GM12878 (cell line): ENCODE measurements at regions of chr17 and their contacts with region 1.

Region 1: GRCh38 chr17:2282297-2282873 is 21.2 kb downstream of the SMG6 start:
- DNase-seq: no peak
- ATAC-seq: peak; percentile 50; the same call in 2 of the 3 replicates
- H3K4me3 ChIP-seq: no peak overlapping the region
- H3K27ac ChIP-seq: peak overlapping the region; percentile 37
- H3K4me1 ChIP-seq: 0 out of 2 replicates have a peak, but pooled peaks cover 3% of the 10 kb centered on the region
- H3K27me3 ChIP-seq: no peaks in the 10 kb centered on the region
- CTCF ChIP-seq: peak; percentile 37 to 64 (median 59); a peak in 4 of 6 replicates
- EP300 ChIP-seq: no peak
- POLR2A ChIP-seq: no peak
- RAD21 ChIP-seq: peak; percentile 73

Region 2: DNA sequence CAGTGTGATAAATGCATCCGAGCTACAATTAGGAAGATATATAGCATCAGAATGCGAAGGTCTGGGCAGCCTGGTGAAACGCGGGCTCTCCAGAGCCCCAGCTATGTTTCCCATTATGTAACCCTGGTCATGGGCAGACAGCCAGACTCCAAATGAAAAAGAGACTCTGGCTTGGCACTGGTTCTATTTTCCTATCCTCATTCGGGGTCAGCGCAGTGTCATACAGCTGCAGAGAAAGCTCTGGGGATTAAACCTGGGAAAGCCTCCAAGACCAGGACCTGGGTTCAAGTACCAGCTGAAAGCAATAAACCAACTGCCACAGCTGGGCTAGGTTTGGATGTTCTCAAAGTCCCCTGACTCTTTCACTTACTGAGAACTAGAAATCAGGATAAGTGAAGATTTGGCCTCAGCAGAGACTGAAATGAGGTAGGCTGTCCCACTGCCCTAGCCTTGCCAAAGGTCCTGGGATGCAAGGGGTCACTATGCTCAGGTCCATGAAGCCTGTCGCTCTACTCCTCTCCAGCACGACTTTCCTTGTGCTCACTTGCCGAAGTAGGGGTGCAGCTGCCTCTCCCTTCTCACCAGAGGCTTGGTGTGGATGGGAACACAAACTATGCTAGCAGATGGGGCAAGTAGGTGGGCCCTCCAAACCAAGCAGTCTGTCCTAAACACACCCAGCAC is 102.6 kb before region 1 on chr17:
- CTCF ChIA-PET with region 1: interaction called, 11 read pairs
- POLR2A ChIA-PET with region 1: no interaction called
- RAD21 ChIA-PET with region 1: no interaction called
- SMC1A ChIA-PET with region 1: interaction called, 3 read pairs
- in situ Hi-C with region 1: no loop called
- intact Hi-C with region 1: no loop called
- DNase-seq: no peak
- ATAC-seq: no peak
- H3K4me3 ChIP-seq: no peak overlapping the region
- H3K27ac ChIP-seq: no peak overlapping the region
- H3K4me1 ChIP-seq: no peaks in the 10 kb centered on the region
- H3K27me3 ChIP-seq: no peaks in the 10 kb centered on the region
- CTCF ChIP-seq: no peak
- EP300 ChIP-seq: no peak
- POLR2A ChIP-seq: no peak
- RAD21 ChIP-seq: no peak

Region 3: DNA sequence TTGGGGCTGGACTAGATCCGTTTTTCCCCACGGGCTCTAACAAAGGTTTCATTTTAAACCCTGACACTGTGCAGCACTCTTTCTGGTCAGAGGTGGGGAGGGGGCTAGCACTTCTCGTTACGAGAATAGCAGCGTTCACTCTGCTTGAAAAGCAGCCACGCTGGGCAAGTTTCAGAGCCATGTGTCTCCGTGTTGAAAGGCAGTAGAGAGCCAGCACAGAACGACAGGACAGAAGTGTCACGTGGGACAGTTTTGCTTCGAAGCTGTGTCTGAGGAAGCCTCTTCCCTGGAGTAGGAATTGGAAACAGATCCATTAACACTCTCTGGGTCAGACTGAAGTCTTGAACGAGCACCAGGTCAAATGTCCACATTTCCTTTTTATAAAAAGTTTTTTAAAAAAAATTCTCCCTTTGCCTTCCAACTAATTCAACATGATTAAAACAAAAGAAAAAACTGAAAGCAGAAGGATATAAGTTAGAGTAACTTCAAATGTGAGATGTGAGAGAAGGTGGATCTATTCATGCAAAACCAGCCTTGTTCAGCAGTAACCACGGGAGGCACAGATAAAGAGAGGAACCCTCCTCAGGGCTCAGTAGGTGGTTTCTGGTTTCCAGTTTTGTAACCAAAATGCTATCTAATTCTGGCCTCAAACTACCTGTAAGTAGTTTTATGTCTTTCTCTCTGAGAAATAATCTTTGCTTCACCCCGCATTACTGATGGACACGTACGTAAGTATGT is 43.8 kb before region 1 on chr17:
- CTCF ChIA-PET with region 1: interaction called, 109 read pairs
- POLR2A ChIA-PET with region 1: no interaction called
- RAD21 ChIA-PET with region 1: interaction called, 63 read pairs
- SMC1A ChIA-PET with region 1: interaction called, 74 read pairs
- in situ Hi-C with region 1: no loop called
- intact Hi-C with region 1: no loop called
- DNase-seq: peak; percentile 86
- ATAC-seq: peak; percentile 88
- H3K4me3 ChIP-seq: peak overlapping the region; percentile 45; the same call in 1 of the 2 replicates
- H3K27ac ChIP-seq: peak overlapping the region; percentile 99
- H3K4me1 ChIP-seq: peaks cover 50% of the 10 kb centered on the region
- H3K27me3 ChIP-seq: no peaks in the 10 kb centered on the region
- CTCF ChIP-seq: no peak
- EP300 ChIP-seq: 0 out of 4 replicates have a peak, but pooled peaks of 1 of the 2 experiments have one; percentile 34
- POLR2A ChIP-seq: peak; percentile 62
- RAD21 ChIP-seq: no peak

Region 4: DNA sequence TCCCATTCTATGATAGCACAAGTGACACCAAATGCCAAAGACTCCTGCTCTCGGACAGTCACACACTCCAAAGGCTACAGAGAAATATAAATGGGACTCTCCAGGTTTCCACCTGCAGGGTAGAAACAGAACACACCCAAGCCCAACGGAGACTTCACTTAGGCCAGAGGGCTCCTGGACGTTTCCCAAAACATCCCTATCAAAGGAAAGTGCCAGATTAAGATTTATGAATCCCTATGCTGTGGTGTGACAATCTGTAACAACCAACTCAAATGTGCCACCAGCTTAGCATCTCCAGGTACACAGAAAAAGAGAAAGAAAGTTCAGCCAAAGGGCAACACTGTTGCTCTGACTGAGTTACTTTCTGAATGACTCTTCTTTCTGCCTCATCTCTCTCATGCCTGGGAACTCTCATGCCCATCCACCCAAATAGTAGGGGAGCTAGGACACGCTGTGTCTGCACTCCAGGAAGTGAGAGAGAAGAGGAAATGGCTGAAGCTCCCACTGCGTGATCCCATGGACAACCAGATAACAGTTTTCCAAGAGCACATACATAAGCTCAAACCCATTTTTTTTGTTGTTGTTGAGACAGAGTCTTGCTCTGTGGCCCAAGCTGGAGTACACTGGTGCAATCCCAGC is 28.5 kb before region 1 on chr17:
- CTCF ChIA-PET with region 1: interaction called, 22 read pairs
- POLR2A ChIA-PET with region 1: interaction called, 4 read pairs
- RAD21 ChIA-PET with region 1: interaction called, 15 read pairs
- SMC1A ChIA-PET with region 1: interaction called, 30 read pairs
- in situ Hi-C with region 1: no loop called
- intact Hi-C with region 1: no loop called
- DNase-seq: peak; percentile 90
- ATAC-seq: peak; percentile 97
- H3K4me3 ChIP-seq: peak overlapping the region; percentile 36; the same call in 1 of the 2 replicates
- H3K27ac ChIP-seq: peak overlapping the region; percentile 90
- H3K4me1 ChIP-seq: peaks cover 36% of the 10 kb centered on the region
- H3K27me3 ChIP-seq: no peaks in the 10 kb centered on the region
- CTCF ChIP-seq: no peak
- EP300 ChIP-seq: peak; percentile 91 to 95
- POLR2A ChIP-seq: peak; percentile 37; the same call in 1 of the 2 replicates
- RAD21 ChIP-seq: peak; percentile 12; the same call in 1 of the 2 replicates

Region 5: GRCh38 chr17:2259769-2260536 is 22.4 kb before region 1 on chr17:
- CTCF ChIA-PET with region 1: interaction called, 22 read pairs
- POLR2A ChIA-PET with region 1: interaction called, 4 read pairs
- RAD21 ChIA-PET with region 1: interaction called, 6 read pairs
- SMC1A ChIA-PET with region 1: interaction called, 8 read pairs
- in situ Hi-C with region 1: no loop called
- intact Hi-C with region 1: no loop called
- DNase-seq: peak; percentile 85
- ATAC-seq: peak; percentile 91
- H3K4me3 ChIP-seq: peak overlapping the region; percentile 44; the same call in 1 of the 2 replicates
- H3K27ac ChIP-seq: peak overlapping the region; percentile 99
- H3K4me1 ChIP-seq: peaks cover 64% of the 10 kb centered on the region
- H3K27me3 ChIP-seq: no peaks in the 10 kb centered on the region
- CTCF ChIP-seq: no peak
- EP300 ChIP-seq: peak; percentile 67 to 80
- POLR2A ChIP-seq: peak; percentile 61
- RAD21 ChIP-seq: no peak

Region 6: GRCh38 chr17:2266045-2266864 is 16.1 kb before region 1 on chr17:
- CTCF ChIA-PET with region 1: interaction called, 22 read pairs
- POLR2A ChIA-PET with region 1: interaction called, 9 read pairs
- RAD21 ChIA-PET with region 1: interaction called, 6 read pairs
- SMC1A ChIA-PET with region 1: interaction called, 37 read pairs
- in situ Hi-C with region 1: no loop called
- intact Hi-C with region 1: no loop called
- DNase-seq: peak; percentile 97
- ATAC-seq: peak; percentile 90
- H3K4me3 ChIP-seq: peak overlapping the region; percentile 28; the same call in 1 of the 2 replicates
- H3K27ac ChIP-seq: peak overlapping the region; percentile 99
- H3K4me1 ChIP-seq: peaks cover 61% of the 10 kb centered on the region
- H3K27me3 ChIP-seq: no peaks in the 10 kb centered on the region
- CTCF ChIP-seq: no peak
- EP300 ChIP-seq: peak; percentile 58 to 87; a peak in 3 of 4 replicates
- POLR2A ChIP-seq: peak; percentile 64
- RAD21 ChIP-seq: peak; percentile 16; the same call in 1 of the 2 replicates

Region 7: DNA sequence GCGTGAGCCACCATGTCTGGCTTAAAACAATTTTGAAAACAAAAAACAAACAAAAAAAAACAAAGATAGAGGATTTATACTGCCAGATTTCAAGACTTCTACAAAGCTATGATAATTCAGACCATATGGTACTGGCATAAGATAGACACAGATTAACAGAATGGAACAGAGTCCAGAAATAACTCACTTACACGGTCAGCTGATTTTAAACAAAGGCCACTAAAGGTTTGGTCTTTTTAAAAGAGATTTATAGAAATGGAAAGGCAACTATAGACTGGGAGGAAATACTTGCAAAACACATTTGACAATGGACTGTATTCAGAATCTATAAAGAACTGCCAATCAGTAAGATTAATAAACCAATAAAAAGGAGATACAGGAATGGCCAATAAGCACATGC is 167.1 kb after region 1 on chr17:
- CTCF ChIA-PET with region 1: no interaction called
- POLR2A ChIA-PET with region 1: no interaction called
- RAD21 ChIA-PET with region 1: no interaction called
- SMC1A ChIA-PET with region 1: no interaction called
- in situ Hi-C with region 1: no loop called
- intact Hi-C with region 1: no loop called
- DNase-seq: no peak
- ATAC-seq: peak; percentile 60
- H3K4me3 ChIP-seq: no peak overlapping the region
- H3K27ac ChIP-seq: no peak overlapping the region; the same call in 1 of the 2 replicates
- H3K4me1 ChIP-seq: peaks cover 12% of the 10 kb centered on the region
- H3K27me3 ChIP-seq: no peaks in the 10 kb centered on the region
- CTCF ChIP-seq: no peak
- EP300 ChIP-seq: 0 out of 4 replicates have a peak, but pooled peaks of 1 of the 2 experiments have one; percentile 20
- POLR2A ChIP-seq: no peak
- RAD21 ChIP-seq: no peak